ENCODE measurements at regions of chr14 and their contacts with region 1.

Region 1: GRCh38 chr14:52175982-52176502 is 91.5 kb upstream of the PTGDR start:
- DNase-seq: peak; percentile 16 to 91 (median 44)
- ATAC-seq: peak; percentile 84
- H3K4me3 ChIP-seq: peak overlapping the region in 1 of 2 experiments; percentile 4
- H3K4me3 Mint-ChIP-seq: peak overlapping the region; percentile 47
- H3K27ac ChIP-seq: peak overlapping the region; percentile 29 to 65
- H3K27ac Mint-ChIP-seq: peak overlapping the region; percentile 81
- H3K4me1 ChIP-seq: peaks cover 35% of the 10 kb centered on the region
- H3K4me1 Mint-ChIP-seq: peaks cover 45% of the 10 kb centered on the region
- H3K27me3 ChIP-seq: no peaks in the 10 kb centered on the region
- H3K27me3 Mint-ChIP-seq: no peaks in the 10 kb centered on the region
- CTCF ChIP-seq: no peak

Region 2: GRCh38 chr14:52154992-52155650 is 20.9 kb before region 1 on chr14:
- CTCF ChIA-PET with region 1: no interaction called
- POLR2A ChIA-PET with region 1: interaction called, 4 read pairs
- intact Hi-C with region 1: loop called in 1 of 2 experiments (anchors 2 kb)
- DNase-seq: peak in 2 of 9 experiments; percentile 34 to 69
- ATAC-seq: peak; percentile 65
- H3K4me3 ChIP-seq: no peak overlapping the region
- H3K4me3 Mint-ChIP-seq: peak overlapping the region; percentile 55
- H3K27ac ChIP-seq: peak overlapping the region in 1 of 2 experiments; percentile 63
- H3K27ac Mint-ChIP-seq: peak overlapping the region; percentile 83
- H3K4me1 ChIP-seq: peaks cover 39% of the 10 kb centered on the region
- H3K4me1 Mint-ChIP-seq: peaks cover 64% of the 10 kb centered on the region
- H3K27me3 ChIP-seq: no peaks in the 10 kb centered on the region
- H3K27me3 Mint-ChIP-seq: no peaks in the 10 kb centered on the region
- CTCF ChIP-seq: no peak

Region 3: DNA sequence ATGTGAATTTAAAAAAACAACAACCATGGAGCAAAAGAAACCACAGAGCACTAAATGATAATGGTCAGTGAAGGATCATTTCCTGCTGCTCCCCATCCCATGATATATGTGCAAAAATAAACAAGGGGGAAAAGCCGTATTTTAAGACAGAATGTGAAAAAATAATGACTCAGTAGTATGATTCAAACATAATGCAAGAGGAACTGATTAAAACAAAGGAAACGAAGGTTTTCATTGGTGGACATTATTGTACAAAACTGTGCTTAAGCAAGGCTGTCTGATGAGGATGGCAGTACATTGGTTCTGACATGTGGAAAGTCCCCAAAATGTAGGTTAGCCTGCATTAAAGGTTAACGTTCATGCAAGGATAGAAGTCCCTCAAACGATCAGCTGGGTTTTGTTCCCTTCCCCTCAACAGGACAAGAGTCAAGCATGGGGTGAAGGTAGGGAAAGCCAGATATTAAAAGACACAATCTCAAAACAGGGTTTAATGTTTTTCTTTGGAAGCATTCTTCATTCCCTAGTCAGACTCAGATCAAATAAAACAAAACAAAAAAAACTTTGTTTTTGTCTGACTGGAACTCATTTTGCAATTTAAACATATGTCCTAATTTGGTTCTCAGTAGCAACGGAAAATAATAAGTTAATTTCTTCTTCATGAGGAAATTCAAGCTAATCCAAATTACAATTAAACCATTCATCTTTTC is 65.2 kb after region 1 on chr14:
- CTCF ChIA-PET with region 1: no interaction called
- POLR2A ChIA-PET with region 1: no interaction called
- intact Hi-C with region 1: loop called in 1 of 2 experiments (anchors 10 kb)
- DNase-seq: no peak
- ATAC-seq: no peak
- H3K4me3 ChIP-seq: no peak overlapping the region
- H3K4me3 Mint-ChIP-seq: no peak overlapping the region
- H3K27ac ChIP-seq: no peak overlapping the region
- H3K27ac Mint-ChIP-seq: no peak overlapping the region
- H3K4me1 ChIP-seq: peaks cover 11% of the 10 kb centered on the region
- H3K4me1 Mint-ChIP-seq: peaks cover 22% of the 10 kb centered on the region
- H3K27me3 ChIP-seq: no peaks in the 10 kb centered on the region
- H3K27me3 Mint-ChIP-seq: no peaks in the 10 kb centered on the region
- CTCF ChIP-seq: no peak

Measured in CD8-positive, alpha-beta T cell (primary cell).